MCF 10A (cell line): ENCODE measurements at regions of chr5 and their contacts with region 1.

Region 1: GRCh38 chr5:129460936-129461711 is 1.0 kb downstream of the ADAMTS19 start:
- DNase-seq: no peak
- H3K4me3 Mint-ChIP-seq: peak overlapping the region; percentile 62
- H3K27ac Mint-ChIP-seq: no peak overlapping the region
- H3K4me1 Mint-ChIP-seq: no peaks in the 10 kb centered on the region
- H3K27me3 Mint-ChIP-seq: peaks cover 53% of the 10 kb centered on the region
- CTCF ChIP-seq: no peak

Region 2: GRCh38 chr5:129481161-129481560 is 20.0 kb after region 1 on chr5:
- CTCF ChIA-PET with region 1: interaction called, 11 read pairs
- POLR2A ChIA-PET with region 1: interaction called, 3 read pairs
- intact Hi-C with region 1: no loop called
- DNase-seq: no peak
- H3K4me3 Mint-ChIP-seq: no peak overlapping the region
- H3K27ac Mint-ChIP-seq: no peak overlapping the region
- H3K4me1 Mint-ChIP-seq: no peaks in the 10 kb centered on the region
- H3K27me3 Mint-ChIP-seq: peaks cover 35% of the 10 kb centered on the region
- CTCF ChIP-seq: no peak

Region 3: DNA sequence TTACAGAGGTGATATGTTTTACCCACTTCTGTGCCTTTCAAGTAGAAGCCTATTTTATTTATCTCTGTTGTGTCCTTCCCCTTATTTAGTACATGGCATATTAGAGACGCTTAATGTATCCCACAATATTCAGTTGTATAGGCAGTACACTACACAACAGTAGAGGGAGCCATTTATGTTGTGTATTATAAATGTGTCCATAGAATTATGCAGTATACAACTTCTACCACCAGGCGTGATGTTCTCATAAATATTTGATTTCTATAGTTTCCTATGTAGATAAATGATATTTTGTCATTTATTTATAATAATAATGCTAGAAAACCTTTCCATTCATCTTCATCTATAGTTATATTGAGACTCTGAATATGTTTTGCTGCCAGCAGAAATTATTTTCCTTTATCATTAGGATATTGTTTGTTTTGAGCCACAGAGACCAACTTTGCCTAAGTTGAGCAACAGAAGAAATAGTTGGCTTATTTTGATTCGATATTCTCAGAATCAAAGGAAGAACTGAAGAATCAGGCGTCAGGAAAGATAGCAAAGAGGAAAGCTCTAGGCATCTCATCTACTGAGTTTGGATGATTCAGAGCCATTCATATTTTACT is 80.6 kb after region 1 on chr5:
- CTCF ChIA-PET with region 1: no interaction called
- POLR2A ChIA-PET with region 1: no interaction called
- intact Hi-C with region 1: no loop called
- DNase-seq: peak; percentile 74
- H3K4me3 Mint-ChIP-seq: no peak overlapping the region
- H3K27ac Mint-ChIP-seq: no peak overlapping the region
- H3K4me1 Mint-ChIP-seq: no peaks in the 10 kb centered on the region
- H3K27me3 Mint-ChIP-seq: peaks cover 16% of the 10 kb centered on the region
- CTCF ChIP-seq: peak; percentile 60

Region 4: GRCh38 chr5:129804705-129805104 is 343.6 kb after region 1 on chr5:
- CTCF ChIA-PET with region 1: no interaction called
- POLR2A ChIA-PET with region 1: no interaction called
- intact Hi-C with region 1: no loop called
- DNase-seq: no peak
- H3K4me3 Mint-ChIP-seq: no peak overlapping the region
- H3K27ac Mint-ChIP-seq: no peak overlapping the region
- H3K4me1 Mint-ChIP-seq: peaks cover 6% of the 10 kb centered on the region
- H3K27me3 Mint-ChIP-seq: no peaks in the 10 kb centered on the region
- CTCF ChIP-seq: no peak